Pancreas (tissue), 10 donors: ENCODE measurements at regions of chr2 and their contacts with region 1.

Region 1: DNA sequence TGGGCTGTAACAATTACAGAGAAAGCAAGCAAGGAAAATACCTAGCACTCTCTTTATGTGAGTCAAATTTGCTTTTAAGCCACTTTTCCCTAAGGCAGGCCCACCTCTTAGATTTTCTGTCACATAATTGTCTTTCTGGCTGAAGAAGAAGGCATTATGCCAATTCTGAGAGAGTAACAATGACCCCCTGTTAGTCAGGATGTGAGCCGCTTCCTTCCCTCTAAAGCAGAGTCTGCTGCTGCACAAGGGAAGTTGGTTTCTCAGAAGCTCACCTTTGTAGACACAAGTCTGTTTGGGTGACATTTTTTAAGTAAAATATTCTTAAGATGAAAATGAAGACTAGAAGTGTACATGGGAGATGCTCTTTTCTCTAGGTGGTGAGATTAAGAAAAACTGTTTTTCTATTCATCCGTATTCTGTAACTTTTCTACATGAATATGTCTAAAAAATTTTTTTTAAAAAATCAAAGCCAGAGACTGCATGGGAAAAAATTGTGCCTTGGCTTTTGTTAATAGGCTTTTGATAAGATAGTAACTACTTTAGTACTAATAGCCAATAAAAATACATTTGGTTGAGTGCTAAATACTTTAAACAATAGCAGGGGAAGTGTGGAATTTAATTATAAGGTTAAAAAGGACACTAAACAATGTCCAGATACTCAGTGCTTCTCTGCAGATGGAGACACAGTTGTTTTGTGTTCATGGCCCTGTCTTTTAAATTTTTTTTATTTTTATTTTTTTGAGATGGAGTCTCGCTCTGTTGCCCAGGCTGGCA is 33.4 kb upstream of the VPS54 start:
- DNase-seq: no peak
- ATAC-seq: no peak
- H3K4me3 ChIP-seq: no peak overlapping the region
- H3K27ac ChIP-seq: no peak overlapping the region
- H3K4me1 ChIP-seq: peaks cover 0 to 3% (median 0%) of the 10 kb centered on the region in 3 donors
- H3K27me3 ChIP-seq: no peaks in the 10 kb centered on the region
- CTCF ChIP-seq: no peak

Region 2: GRCh38 chr2:64144057-64145013 is 91.7 kb after region 1 on chr2 and contains the start of gene PELI1:
- intact Hi-C with region 1: loop called in 1 of 3 experiments (anchors 10 kb)
- DNase-seq: peak; percentile 94 to 98 (median 98)
- ATAC-seq: peak; percentile 95 to 98 (median 97)
- H3K4me3 ChIP-seq: peak within 1 kb of the TSS; percentile 78 to 97 (median 88)
- H3K27ac ChIP-seq: peak within 1 kb of the TSS; percentile 89 to 98 (median 96)
- H3K4me1 ChIP-seq: peaks cover 0 to 13% (median 10%) of the 10 kb centered on the region in 3 donors
- H3K27me3 ChIP-seq: no peaks in the 10 kb centered on the region
- CTCF ChIP-seq: no peak
- total RNA-seq, gene PELI1: 5.5 to 15.9 (median 11.3) TPM

Region 3: DNA sequence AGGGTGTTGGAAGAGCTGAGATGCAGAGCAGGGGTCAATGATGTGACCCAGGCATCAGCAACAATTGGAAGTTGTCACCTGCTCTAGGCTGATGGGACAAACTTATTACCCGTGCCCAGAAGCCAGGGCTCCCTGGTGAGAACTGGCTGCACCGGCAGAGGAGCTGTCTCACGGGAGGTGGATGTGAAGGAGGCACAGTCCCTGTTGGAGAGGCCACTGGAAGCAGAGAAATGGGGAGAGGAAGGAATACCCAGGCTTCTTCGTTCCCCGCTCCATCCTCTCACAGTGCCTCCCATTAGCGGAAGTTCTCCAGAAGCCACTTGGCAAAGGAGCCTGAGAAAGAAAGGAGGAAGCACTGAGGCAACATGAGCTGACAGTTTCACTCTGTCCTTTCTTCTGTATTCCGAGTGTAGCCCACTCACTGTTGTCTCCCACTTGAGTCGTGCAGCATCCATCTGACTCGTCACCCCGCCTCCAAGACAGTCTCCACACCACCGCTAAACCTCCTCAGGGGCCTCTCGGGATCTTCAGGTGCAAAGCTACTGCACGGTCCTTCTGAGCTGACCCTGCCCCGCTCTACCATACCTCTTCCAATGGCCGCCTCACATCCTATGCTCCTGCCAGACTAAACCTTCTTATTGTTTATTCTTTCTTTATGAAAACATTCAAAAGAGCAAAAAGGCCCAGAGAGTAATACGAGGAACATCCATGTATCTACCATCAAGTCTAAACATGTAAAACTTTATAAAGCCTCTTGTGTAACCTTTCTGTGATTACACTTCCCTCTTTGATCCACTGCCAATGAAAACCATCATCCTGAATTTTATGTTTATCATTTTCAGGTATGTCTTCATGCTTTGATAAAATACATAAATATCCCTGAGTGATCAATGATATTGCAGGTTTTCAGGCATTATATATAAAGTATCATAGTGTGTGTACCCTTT is 452.4 kb after region 1 on chr2:
- intact Hi-C with region 1: loop called in 1 of 3 experiments (anchors 10 kb)
- DNase-seq: no peak
- ATAC-seq: no peak
- H3K4me3 ChIP-seq: no peak overlapping the region
- H3K27ac ChIP-seq: no peak overlapping the region
- H3K4me1 ChIP-seq: no peaks in the 10 kb centered on the region
- H3K27me3 ChIP-seq: no peaks in the 10 kb centered on the region
- CTCF ChIP-seq: no peak

Region 4: DNA sequence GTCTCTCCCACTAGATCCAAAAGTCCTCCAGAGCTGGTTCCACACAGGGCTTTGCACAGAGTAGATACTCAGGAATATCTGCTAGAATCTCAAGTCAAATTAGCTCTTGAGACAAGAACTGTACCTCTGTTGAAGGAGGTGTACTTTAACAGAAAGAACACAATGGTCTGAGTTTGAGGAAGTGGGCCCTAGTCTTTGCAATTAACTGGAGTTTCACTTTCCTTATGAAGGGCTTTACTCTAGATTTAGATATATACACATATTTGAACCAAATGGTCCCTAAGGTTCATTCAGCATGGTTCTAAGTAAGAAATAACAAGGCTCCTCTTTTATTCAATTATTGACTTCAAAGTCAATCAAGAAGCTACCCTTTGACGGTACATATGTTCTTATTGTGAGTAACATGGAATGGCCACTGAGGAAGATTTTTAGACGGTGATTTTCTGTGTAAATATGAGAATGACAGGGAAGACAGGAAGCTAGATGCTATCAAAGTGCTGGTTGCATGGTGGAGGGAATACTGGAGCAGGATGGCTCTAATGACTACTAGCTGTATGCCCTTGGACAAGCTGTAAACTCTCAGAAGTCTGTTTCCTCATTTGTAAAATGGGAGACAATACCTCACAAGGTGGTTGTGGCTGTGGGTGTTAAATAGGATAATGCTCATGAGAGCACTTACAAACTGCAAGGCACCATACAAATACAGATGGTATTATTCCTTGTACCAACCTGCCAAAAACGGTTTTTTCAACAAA is 674.5 kb after region 1 on chr2:
- intact Hi-C with region 1: no loop called
- DNase-seq: no peak
- ATAC-seq: peak in 1 of 4 donors; percentile 25
- H3K4me3 ChIP-seq: no peak overlapping the region
- H3K27ac ChIP-seq: no peak overlapping the region
- H3K4me1 ChIP-seq: peaks cover 8 to 25% (median 11%) of the 10 kb centered on the region in 3 donors
- H3K27me3 ChIP-seq: no peaks in the 10 kb centered on the region
- CTCF ChIP-seq: no peak